ENCODE measurements at regions of chr16 and their contacts with region 1.

Region 1: GRCh38 chr16:28069971-28070794 is 6.7 kb upstream of the GSG1L start:
- DNase-seq: no peak
- H3K4me3 ChIP-seq: no peak overlapping the region
- H3K27ac ChIP-seq: no peak overlapping the region
- H3K4me1 ChIP-seq: no peaks in the 10 kb centered on the region
- CTCF ChIP-seq: no peak

Region 2: GRCh38 chr16:27639561-27640276 is 430.5 kb before region 1 on chr16:
- CTCF ChIA-PET with region 1: no interaction called
- POLR2A ChIA-PET with region 1: no interaction called
- intact Hi-C with region 1: loop called (anchors 10 kb)
- DNase-seq: peak; percentile 53
- H3K4me3 ChIP-seq: no peak overlapping the region
- H3K27ac ChIP-seq: no peak overlapping the region
- H3K4me1 ChIP-seq: no peaks in the 10 kb centered on the region
- CTCF ChIP-seq: peak; percentile 88

Region 3: DNA sequence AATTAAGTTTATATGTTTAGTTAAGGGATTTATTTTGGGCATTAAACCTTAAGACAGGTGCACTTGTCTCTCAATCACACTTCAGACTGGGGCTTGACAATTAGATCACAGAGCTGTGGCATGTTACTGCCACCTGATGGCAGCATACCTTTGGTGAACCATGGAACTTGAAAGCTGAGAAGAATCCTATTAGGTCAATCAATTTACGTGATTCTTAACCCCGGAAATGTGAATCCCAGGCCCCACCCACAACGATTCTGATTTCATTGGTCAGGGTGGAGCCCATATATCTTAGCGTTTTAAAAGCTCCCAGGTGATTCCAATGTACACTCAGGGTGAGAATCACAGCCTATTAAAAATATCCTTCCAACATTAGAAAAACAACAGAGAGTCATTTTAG is 97.7 kb before region 1 on chr16:
- CTCF ChIA-PET with region 1: interaction called, 3 read pairs
- POLR2A ChIA-PET with region 1: no interaction called
- intact Hi-C with region 1: loop called (anchors 2 kb)
- DNase-seq: peak; percentile 66
- H3K4me3 ChIP-seq: no peak overlapping the region
- H3K27ac ChIP-seq: no peak overlapping the region
- H3K4me1 ChIP-seq: no peaks in the 10 kb centered on the region
- CTCF ChIP-seq: peak; percentile 90

Measured in OCI-LY7 (cell line).